ENCODE measurements at regions of chr2 and their contacts with region 1.

Region 1: DNA sequence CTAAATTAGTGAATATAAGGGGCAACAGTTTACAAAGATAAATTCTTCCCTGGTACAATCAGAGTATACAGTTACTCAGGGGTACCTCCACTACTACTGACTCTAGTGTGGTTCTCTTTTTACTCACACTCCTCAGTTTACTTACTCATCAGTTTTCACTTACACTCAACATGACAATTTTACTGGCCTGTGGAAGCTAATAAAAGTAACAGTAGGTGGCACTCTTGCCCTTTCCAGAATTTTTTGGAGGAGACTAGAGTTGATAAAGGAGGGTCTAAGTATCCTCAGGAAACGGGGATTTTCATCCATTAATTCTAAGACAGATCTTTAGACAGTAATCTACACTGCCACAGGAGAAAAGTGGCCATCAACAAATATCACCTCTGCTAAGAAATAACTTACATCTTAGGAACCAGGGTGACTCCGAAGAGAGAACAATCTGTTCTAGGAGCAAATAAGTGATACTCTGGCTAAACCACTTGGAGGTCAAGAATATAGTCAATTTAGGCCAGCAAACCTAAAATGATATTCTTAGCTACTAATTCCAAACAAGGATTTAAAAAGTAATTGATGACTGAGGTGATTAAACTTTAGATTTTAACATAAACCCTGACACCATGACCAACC is 61.3 kb downstream of the ATL2 start:
- DNase-seq: peak; percentile 58 to 64
- ATAC-seq: peak; percentile 93 to 94
- H3K4me3 ChIP-seq: no peak overlapping the region
- H3K27ac ChIP-seq: no peak overlapping the region
- H3K4me1 ChIP-seq: no peaks in the 10 kb centered on the region
- CTCF ChIP-seq: peak; percentile 96
- EP300 ChIP-seq: no peak
- POLR2A ChIP-seq: no peak
- RAD21 ChIP-seq: peak; percentile 86 to 92

Region 2: GRCh38 chr2:38327580-38327979 is 11.8 kb after region 1 on chr2:
- CTCF ChIA-PET with region 1: interaction called, 27 read pairs
- POLR2A ChIA-PET with region 1: no interaction called
- DNase-seq: no peak
- ATAC-seq: no peak
- H3K4me3 ChIP-seq: no peak overlapping the region
- H3K27ac ChIP-seq: no peak overlapping the region
- H3K4me1 ChIP-seq: no peaks in the 10 kb centered on the region
- CTCF ChIP-seq: no peak
- EP300 ChIP-seq: no peak
- POLR2A ChIP-seq: no peak
- RAD21 ChIP-seq: no peak

Region 3: DNA sequence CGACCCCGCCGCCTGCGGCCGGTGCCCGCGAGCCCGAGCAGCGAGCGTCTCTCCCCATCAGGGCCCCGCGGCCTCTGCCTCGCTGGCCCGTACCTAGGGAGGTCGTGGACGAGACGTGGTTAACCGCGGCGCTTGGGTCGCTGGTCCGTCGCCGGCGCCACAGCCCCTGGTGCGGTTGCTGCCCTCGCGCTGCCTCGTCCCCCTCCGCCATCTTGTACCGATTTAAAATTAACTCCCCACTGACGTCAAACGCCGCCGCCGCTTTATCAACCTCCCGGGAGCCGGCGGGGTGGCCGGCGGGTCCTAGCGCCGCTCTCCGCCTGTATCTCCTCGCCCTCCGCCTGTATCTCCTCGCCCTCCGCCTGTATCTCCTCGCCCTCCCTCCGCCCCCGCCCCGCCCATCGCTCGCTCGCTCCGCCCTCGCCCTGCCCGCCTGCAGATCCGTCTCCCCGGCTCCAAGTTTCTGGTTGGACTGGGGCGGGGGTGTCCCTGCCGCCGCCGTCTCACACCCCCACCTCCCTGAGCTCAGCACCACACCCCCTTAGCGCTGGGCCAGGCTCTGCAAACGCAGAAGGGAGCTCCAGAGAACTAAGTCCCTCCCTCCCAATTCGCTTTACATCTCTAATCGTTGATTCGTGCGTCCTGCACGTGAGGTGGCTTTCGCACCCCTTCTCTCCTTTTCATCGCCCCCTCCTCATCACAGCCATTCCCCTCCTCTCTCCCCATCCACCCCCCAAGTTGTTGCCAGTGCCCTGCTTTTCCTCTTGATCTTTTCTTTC is 61.4 kb after region 1 on chr2 and contains the start of gene ATL2:
- CTCF ChIA-PET with region 1: interaction called, 38 read pairs
- POLR2A ChIA-PET with region 1: interaction called, 3 read pairs
- DNase-seq: peak; percentile 90 to 96
- ATAC-seq: peak; percentile 92
- H3K4me3 ChIP-seq: peak within 1 kb of the TSS; percentile 84
- H3K27ac ChIP-seq: peak within 1 kb of the TSS; percentile 97 to 98
- H3K4me1 ChIP-seq: peaks cover 22% of the 10 kb centered on the region
- CTCF ChIP-seq: no peak
- EP300 ChIP-seq: no peak
- POLR2A ChIP-seq: peak; percentile 89
- RAD21 ChIP-seq: no peak
- polyA plus RNA-seq, gene ATL2: 75.1 and 85.3 TPM in 2 replicates

Region 4: GRCh38 chr2:38465789-38466127 is 149.9 kb after region 1 on chr2:
- CTCF ChIA-PET with region 1: interaction called, 107 read pairs
- POLR2A ChIA-PET with region 1: no interaction called
- DNase-seq: peak; percentile 63 to 66
- ATAC-seq: peak; percentile 77 to 89
- H3K4me3 ChIP-seq: no peak overlapping the region
- H3K27ac ChIP-seq: no peak overlapping the region
- H3K4me1 ChIP-seq: peaks cover 8% of the 10 kb centered on the region; the same call in 2 of the 3 replicates
- CTCF ChIP-seq: peak; percentile 61
- EP300 ChIP-seq: no peak
- POLR2A ChIP-seq: no peak
- RAD21 ChIP-seq: peak; percentile 64 to 68

Region 5: DNA sequence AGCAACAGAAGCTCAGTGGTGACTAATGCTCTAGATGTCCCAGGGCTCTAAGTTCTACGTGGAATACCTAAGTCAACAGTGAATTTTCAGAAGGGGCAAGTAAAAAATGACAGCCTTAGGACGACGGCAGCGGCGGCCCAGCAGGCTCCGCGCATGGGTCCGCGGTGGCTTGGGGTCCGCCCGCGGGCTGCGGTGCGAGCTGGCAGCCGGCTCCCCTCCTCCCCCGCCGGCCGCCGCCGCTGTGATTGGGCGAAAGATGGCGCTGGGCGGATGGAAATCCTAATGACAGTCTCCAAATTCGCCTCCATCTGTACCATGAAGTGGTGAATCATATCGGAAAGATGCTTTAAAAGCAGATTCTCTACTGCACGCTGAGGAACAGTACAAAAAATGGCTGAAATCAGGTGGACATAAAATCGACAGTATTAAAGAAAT is 212.2 kb after region 1 on chr2:
- CTCF ChIA-PET with region 1: interaction called, 31 read pairs
- POLR2A ChIA-PET with region 1: no interaction called
- DNase-seq: peak; percentile 68 to 73
- ATAC-seq: peak; percentile 86 to 91
- H3K4me3 ChIP-seq: peak overlapping the region; percentile 45
- H3K27ac ChIP-seq: peak overlapping the region; percentile 60 to 86
- H3K4me1 ChIP-seq: peaks cover 6% of the 10 kb centered on the region; the same call in 1 of the 3 replicates
- CTCF ChIP-seq: 0 out of 3 replicates have a peak, but pooled peaks have one; percentile 23
- EP300 ChIP-seq: no peak
- POLR2A ChIP-seq: no peak
- RAD21 ChIP-seq: peak; percentile 39 to 48; a peak in 4 of 5 replicates

Region 6: DNA sequence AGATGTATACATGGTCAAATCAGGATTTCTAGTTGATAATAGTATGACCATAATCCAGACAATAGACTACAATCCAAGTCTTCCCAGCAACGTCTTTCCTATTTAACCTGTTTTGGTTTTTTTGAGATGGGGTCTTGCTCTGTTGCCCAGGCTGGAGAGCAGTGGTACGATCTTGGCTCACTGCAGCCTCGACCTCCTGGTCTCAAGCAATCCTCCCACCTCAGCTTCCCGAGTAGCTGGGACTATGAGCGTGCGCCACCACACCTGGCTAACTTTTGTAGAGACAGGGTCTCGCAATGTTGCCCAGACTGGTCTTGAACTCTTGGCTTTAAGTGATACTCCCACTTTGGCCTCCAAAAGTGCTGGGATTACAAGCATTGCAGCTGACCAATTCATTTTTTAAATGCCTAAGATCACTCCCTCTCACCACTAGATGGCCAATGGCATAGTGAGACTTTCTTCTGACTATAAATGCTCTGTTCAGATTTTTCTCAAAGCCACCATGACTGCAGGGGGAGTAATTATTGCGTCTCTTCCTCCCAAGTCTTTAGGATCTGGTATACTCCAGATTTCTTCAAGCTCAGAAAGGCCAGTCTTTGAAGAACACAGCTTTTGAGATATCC is 239.3 kb after region 1 on chr2:
- CTCF ChIA-PET with region 1: interaction called, 17 read pairs
- POLR2A ChIA-PET with region 1: no interaction called
- DNase-seq: peak; percentile 31 to 54
- ATAC-seq: peak; percentile 87 to 89
- H3K4me3 ChIP-seq: no peak overlapping the region
- H3K27ac ChIP-seq: no peak overlapping the region
- H3K4me1 ChIP-seq: no peaks in the 10 kb centered on the region
- CTCF ChIP-seq: peak; percentile 58
- EP300 ChIP-seq: no peak
- POLR2A ChIP-seq: no peak
- RAD21 ChIP-seq: peak; percentile 37; a peak in 3 of 5 replicates